B cell (primary cell): ENCODE measurements at regions of chr20 and their contacts with region 1.

Region 1: GRCh38 chr20:52083627-52084232 is 107.8 kb downstream of the ZFP64 start:
- DNase-seq: no peak
- ATAC-seq: no peak
- H3K4me3 ChIP-seq: no peak overlapping the region
- H3K4me3 Mint-ChIP-seq: no peak overlapping the region
- H3K27ac ChIP-seq: no peak overlapping the region
- H3K27ac Mint-ChIP-seq: no peak overlapping the region
- H3K4me1 ChIP-seq: no peaks in the 10 kb centered on the region
- H3K4me1 Mint-ChIP-seq: no peaks in the 10 kb centered on the region
- H3K27me3 ChIP-seq: no peaks in the 10 kb centered on the region
- H3K27me3 Mint-ChIP-seq: no peaks in the 10 kb centered on the region
- CTCF ChIP-seq: no peak

Region 2: GRCh38 chr20:51639206-51639832 is 444.4 kb before region 1 on chr20:
- CTCF ChIA-PET with region 1: interaction called, 6 read pairs
- POLR2A ChIA-PET with region 1: no interaction called
- intact Hi-C with region 1: loop called (anchors 5 kb)
- DNase-seq: peak; percentile 65
- ATAC-seq: peak; percentile 41
- H3K4me3 ChIP-seq: no peak overlapping the region
- H3K4me3 Mint-ChIP-seq: no peak overlapping the region
- H3K27ac ChIP-seq: no peak overlapping the region
- H3K27ac Mint-ChIP-seq: no peak overlapping the region
- H3K4me1 ChIP-seq: no peaks in the 10 kb centered on the region
- H3K4me1 Mint-ChIP-seq: peaks cover 1% of the 10 kb centered on the region
- H3K27me3 ChIP-seq: peaks cover 0 to 2% (median 0%) of the 10 kb centered on the region in 4 experiments
- H3K27me3 Mint-ChIP-seq: peaks cover 3% of the 10 kb centered on the region
- CTCF ChIP-seq: peak; percentile 84